MCF 10A (cell line): ENCODE measurements at regions of chr20 and their contacts with region 1.

Region 1: GRCh38 chr20:4064144-4064909 is 49.0 kb upstream of the RNF24 start:
- DNase-seq: peak; percentile 95
- H3K4me3 Mint-ChIP-seq: peak overlapping the region; percentile 40
- H3K27ac Mint-ChIP-seq: peak overlapping the region; percentile 90
- H3K4me1 Mint-ChIP-seq: peaks cover 73% of the 10 kb centered on the region
- H3K27me3 Mint-ChIP-seq: no peaks in the 10 kb centered on the region
- CTCF ChIP-seq: no peak

Region 2: DNA sequence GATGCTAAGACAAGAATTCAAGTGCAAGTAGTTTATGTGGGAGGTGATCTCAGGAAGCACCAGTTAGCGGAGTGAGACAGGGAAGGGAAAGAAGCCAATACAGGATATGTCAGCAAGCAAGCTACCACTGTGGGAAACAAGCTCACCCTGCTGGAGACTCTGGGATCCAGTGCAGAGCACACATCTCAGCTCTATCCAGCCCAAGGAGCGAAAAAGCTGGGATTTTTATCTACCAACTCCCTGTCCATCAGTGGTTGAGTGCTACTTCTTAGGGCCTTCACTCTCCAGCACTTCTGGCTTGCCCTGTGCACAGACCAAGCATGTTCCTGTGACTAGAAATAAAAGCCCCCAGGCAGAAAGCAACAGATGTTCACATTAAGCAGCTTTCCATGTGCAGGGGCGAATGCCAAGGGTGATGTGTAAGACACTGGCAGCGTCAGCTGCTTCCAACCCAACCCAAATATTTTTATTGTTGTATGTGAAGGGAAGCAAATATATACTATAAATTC is 38.2 kb before region 1 on chr20:
- CTCF ChIA-PET with region 1: interaction called, 11 read pairs
- POLR2A ChIA-PET with region 1: interaction called, 35 read pairs
- intact Hi-C with region 1: no loop called
- DNase-seq: peak; percentile 79
- H3K4me3 Mint-ChIP-seq: no peak overlapping the region
- H3K27ac Mint-ChIP-seq: peak overlapping the region; percentile 17
- H3K4me1 Mint-ChIP-seq: peaks cover 32% of the 10 kb centered on the region
- H3K27me3 Mint-ChIP-seq: no peaks in the 10 kb centered on the region
- CTCF ChIP-seq: peak; percentile 11

Region 3: GRCh38 chr20:4053071-4053919 is 11.0 kb before region 1 on chr20:
- CTCF ChIA-PET with region 1: interaction called, 6 read pairs
- POLR2A ChIA-PET with region 1: interaction called, 13 read pairs
- intact Hi-C with region 1: loop called (anchors 1 kb)
- DNase-seq: peak; percentile 69
- H3K4me3 Mint-ChIP-seq: no peak overlapping the region
- H3K27ac Mint-ChIP-seq: no peak overlapping the region
- H3K4me1 Mint-ChIP-seq: peaks cover 18% of the 10 kb centered on the region
- H3K27me3 Mint-ChIP-seq: no peaks in the 10 kb centered on the region
- CTCF ChIP-seq: no peak

Region 4: DNA sequence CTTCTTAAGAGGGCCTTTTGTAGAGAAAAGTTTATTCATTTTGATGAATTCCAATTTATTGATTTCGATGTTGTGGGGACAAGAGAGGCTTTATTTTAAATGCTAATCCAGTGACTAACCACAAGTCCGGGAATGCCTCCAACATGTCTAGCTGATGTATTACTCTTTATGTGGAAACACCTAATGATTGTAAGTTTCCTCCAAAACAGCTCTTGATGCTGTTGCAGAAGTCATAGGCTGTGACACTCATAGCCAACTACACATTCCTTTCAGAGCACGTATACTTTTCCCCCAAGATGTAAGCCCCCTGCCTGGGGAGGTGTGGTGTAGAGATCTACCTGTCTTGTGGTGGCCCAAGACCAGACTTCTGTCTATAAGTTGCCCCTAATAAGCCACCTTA is 12.3 kb after region 1 on chr20:
- CTCF ChIA-PET with region 1: no interaction called
- POLR2A ChIA-PET with region 1: interaction called, 18 read pairs
- intact Hi-C with region 1: no loop called
- DNase-seq: peak; percentile 78
- H3K4me3 Mint-ChIP-seq: no peak overlapping the region
- H3K27ac Mint-ChIP-seq: peak overlapping the region; percentile 44
- H3K4me1 Mint-ChIP-seq: peaks cover 28% of the 10 kb centered on the region
- H3K27me3 Mint-ChIP-seq: no peaks in the 10 kb centered on the region
- CTCF ChIP-seq: no peak

Region 5: GRCh38 chr20:4082406-4083097 is 18.2 kb after region 1 on chr20:
- CTCF ChIA-PET with region 1: interaction called, 15 read pairs
- POLR2A ChIA-PET with region 1: interaction called, 5 read pairs
- intact Hi-C with region 1: no loop called
- DNase-seq: no peak
- H3K4me3 Mint-ChIP-seq: no peak overlapping the region
- H3K27ac Mint-ChIP-seq: no peak overlapping the region
- H3K4me1 Mint-ChIP-seq: peaks cover 22% of the 10 kb centered on the region
- H3K27me3 Mint-ChIP-seq: no peaks in the 10 kb centered on the region
- CTCF ChIP-seq: no peak